Heart right ventricle (tissue), 16 donors: ENCODE measurements at regions of chr2 and their contacts with region 1.

Region 1: DNA sequence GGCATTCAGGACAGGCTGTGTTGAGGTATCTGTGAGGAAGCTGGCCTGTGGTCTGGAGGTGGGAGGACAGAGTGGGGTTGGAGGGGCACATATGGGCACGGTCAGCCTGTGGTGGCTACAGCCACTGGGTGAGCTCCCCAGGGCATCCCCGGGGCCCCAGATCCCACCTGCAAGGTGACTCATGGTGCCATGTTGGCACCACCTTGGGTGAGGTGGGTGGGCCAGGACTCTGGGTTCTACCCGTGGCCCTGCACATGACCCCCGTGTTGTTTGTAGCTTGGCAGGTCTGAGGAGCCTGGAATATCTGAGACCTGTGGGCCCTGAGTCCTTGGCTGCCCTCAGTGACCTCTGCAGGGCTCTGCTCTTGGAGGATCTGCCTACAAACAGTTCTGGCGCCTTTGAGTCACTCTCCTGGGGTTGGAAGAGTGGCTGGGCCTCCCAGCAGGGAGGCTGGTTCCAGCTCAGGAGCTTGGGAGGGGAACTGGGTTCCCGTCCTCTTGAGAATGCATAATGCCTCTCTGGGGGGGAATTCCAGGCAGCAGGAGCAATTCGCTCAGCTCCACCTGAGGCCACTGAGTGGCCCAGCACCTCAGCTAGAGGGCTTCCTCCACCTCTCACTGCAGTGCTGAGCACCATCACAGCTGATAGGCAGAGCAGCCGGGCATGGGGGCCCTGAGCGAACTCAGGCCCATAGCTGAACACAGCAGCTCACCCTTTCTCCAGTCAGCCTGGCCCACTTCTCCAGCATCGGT is 105.1 kb downstream of the DYSF start:
- DNase-seq: no peak
- ATAC-seq: peak in 1 of 8 donors; percentile 30
- H3K4me3 ChIP-seq: no peak overlapping the region
- H3K27ac ChIP-seq: peak overlapping the region in 1 of 10 donors; percentile 26
- H3K4me1 ChIP-seq: no peaks in the 10 kb centered on the region
- H3K27me3 ChIP-seq: no peaks in the 10 kb centered on the region
- CTCF ChIP-seq: no peak

Region 2: GRCh38 chr2:71603311-71603811 is 44.9 kb after region 1 on chr2:
- intact Hi-C with region 1: no loop called
- DNase-seq: peak in 1 of 2 donors; percentile 4
- ATAC-seq: peak in 6 of 8 donors; percentile 31 to 71 (median 46)
- H3K4me3 ChIP-seq: peak overlapping the region in 1 of 10 donors; percentile 17
- H3K27ac ChIP-seq: peak overlapping the region in 8 of 10 donors; percentile 6 to 68 (median 45)
- H3K4me1 ChIP-seq: peaks cover 9 to 39% (median 32%) of the 10 kb centered on the region in 9 donors
- H3K27me3 ChIP-seq: no peaks in the 10 kb centered on the region
- CTCF ChIP-seq: no peak

Region 3: GRCh38 chr2:71671895-71672825 is 113.7 kb after region 1 on chr2:
- intact Hi-C with region 1: loop called in 1 of 10 experiments (anchors 10 kb)
- DNase-seq: no peak
- ATAC-seq: peak in 4 of 8 donors; percentile 13 to 49 (median 43)
- H3K4me3 ChIP-seq: no peak overlapping the region
- H3K27ac ChIP-seq: no peak overlapping the region
- H3K4me1 ChIP-seq: no peaks in the 10 kb centered on the region
- H3K27me3 ChIP-seq: no peaks in the 10 kb centered on the region
- CTCF ChIP-seq: peak in 3 of 9 donors; percentile 14 to 26 (median 22)

Region 4: GRCh38 chr2:72137498-72138010 is 579.1 kb after region 1 on chr2:
- intact Hi-C with region 1: loop called in 1 of 10 experiments (anchors 10 kb)
- DNase-seq: peak; percentile 55 to 75
- ATAC-seq: peak; percentile 45 to 82 (median 74)
- H3K4me3 ChIP-seq: peak overlapping the region in 2 of 10 donors; percentile 11 to 15
- H3K27ac ChIP-seq: no peak overlapping the region
- H3K4me1 ChIP-seq: peaks cover 14 to 29% (median 19%) of the 10 kb centered on the region in 9 donors
- H3K27me3 ChIP-seq: peaks cover 0 to 4% (median 0%) of the 10 kb centered on the region in 7 donors
- CTCF ChIP-seq: peak; percentile 68 to 96 (median 90)